Activated T-helper 1 cell treated with anti-CD3 and anti-CD28 coated beads, Interleukin-12 subunit alpha, Interleukin-12 subunit beta, Interleukin-2, Interleukin-4 antibody, amounts not matched to agents 30 ng/mL and 10 ng/mL and 1 ng/mL, durations not matched to agents 14 hours and 24 hours and 36 hours (primary cell): ENCODE measurements at regions of chr16 and their contacts with region 1.

Region 1: GRCh38 chr16:15572329-15573001 is 70.5 kb downstream of the MARF1 start:
- DNase-seq: no peak
- H3K4me3 Mint-ChIP-seq: no peak overlapping the region
- H3K27ac Mint-ChIP-seq: peak overlapping the region; percentile 69
- H3K4me1 Mint-ChIP-seq: peaks cover 27% of the 10 kb centered on the region
- H3K27me3 Mint-ChIP-seq: no peaks in the 10 kb centered on the region

Region 2: DNA sequence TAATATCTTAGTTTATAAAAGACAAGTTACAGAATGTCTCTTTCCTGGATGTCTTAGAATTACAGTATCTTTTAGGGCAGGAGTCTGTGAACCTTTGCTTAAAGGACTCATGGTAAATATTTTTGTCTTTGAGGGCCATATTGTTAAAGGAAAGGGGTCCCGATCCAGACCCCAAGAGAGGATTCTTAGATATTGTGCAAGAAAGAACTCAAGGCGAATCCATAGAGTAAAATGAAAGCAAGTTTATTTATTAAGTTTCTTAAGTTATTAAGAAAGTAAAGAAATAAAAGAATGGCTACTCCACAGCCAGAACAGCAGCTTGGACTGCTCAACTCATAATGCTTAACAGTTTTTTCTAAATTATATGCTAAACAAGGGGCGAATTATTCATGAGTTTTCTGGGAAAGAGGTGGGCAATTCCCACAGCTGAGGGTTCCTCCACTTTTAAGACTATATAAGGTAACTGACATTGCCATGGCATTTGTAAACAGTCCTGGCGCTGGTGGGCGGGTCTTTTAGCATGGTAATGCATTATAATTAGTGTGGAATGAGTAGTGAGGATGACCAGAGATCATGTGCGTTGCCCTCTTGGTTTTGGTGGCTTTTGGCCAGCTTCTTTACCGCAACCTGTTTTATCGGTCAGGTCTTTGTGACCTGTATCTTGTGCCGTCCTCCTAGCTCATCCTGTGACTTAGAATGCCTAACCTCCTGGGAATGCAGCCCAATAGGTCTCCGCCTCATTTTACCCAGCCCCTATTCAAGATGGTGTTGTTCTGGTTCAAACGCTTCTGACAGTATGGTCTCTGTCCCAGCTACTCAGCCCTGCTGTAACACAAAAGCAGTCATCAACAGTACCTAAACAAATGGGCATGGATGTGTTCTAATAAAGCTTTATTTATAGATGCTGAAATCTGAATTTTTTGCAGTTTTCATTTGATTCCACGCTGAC is 84.9 kb before region 1 on chr16:
- intact Hi-C with region 1: loop called (anchors 2 kb)
- DNase-seq: no peak
- H3K4me3 Mint-ChIP-seq: no peak overlapping the region
- H3K27ac Mint-ChIP-seq: no peak overlapping the region
- H3K4me1 Mint-ChIP-seq: peaks cover 37% of the 10 kb centered on the region
- H3K27me3 Mint-ChIP-seq: no peaks in the 10 kb centered on the region